ENCODE measurements at regions of chr11 and their contacts with region 1.

Region 1: DNA sequence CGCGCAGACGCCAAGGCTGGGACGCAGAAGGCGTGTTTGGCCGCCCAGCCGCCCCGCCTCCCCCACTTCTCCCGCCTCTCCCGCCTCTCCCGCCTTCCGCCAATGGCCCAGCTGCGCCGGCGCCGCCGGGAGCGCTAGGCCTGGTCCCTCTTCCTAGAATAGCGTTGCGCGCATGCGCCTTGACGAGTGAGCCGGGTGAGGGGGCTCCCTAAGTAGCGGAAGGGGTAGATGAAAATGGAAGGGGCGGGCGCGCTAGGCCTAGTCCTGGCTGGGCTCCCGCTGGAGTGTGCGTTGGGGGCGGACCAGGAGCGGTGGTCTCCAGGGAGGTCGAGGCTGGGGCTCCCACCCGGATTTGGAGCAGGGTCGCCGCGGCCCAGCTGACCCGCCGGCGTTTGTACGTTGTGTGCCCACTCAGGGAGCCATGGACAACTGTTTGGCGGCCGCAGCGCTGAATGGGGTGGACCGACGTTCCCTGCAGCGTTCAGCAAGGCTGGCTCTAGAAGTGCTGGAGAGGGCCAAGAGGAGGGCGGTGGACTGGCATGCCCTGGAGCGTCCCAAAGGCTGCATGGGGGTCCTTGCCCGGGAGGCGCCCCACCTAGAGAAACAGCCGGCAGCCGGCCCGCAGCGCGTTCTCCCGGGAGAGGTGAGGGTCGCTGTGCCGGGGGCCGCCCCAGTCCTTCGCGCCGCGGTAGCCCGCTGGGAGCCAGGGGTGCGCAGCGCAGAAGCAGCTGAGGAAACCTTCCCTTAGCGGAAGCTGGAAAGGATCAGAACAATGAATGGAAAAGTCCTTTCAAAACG is at the start of gene AKIP1:
- DNase-seq: peak; percentile 92 to 93
- ATAC-seq: peak; percentile 92 to 93
- H3K4me3 ChIP-seq: peak within 1 kb of the TSS; percentile 87
- H3K27ac ChIP-seq: peak within 1 kb of the TSS; percentile 98
- H3K4me1 ChIP-seq: peaks cover 42% of the 10 kb centered on the region
- CTCF ChIP-seq: no peak
- EP300 ChIP-seq: no peak
- POLR2A ChIP-seq: peak; percentile 77
- RAD21 ChIP-seq: no peak
- polyA plus RNA-seq, gene AKIP1: 61.3 and 66.7 TPM in 2 replicates

Region 2: GRCh38 chr11:8688414-8689362 is 222.5 kb before region 1 on chr11:
- CTCF ChIA-PET with region 1: interaction called, 3 read pairs
- POLR2A ChIA-PET with region 1: interaction called, 12 read pairs
- DNase-seq: peak; percentile 96 to 98
- ATAC-seq: peak; percentile 91 to 92
- H3K4me3 ChIP-seq: peak overlapping the region; percentile 59
- H3K27ac ChIP-seq: peak overlapping the region; percentile 85 to 88
- H3K4me1 ChIP-seq: peaks cover 49% of the 10 kb centered on the region
- CTCF ChIP-seq: 0 out of 3 replicates have a peak, but pooled peaks have one; percentile 23
- EP300 ChIP-seq: no peak
- POLR2A ChIP-seq: peak; percentile 83
- RAD21 ChIP-seq: peak; percentile 44 to 70

Region 3: GRCh38 chr11:8886322-8886721 is 24.9 kb before region 1 on chr11:
- CTCF ChIA-PET with region 1: no interaction called
- POLR2A ChIA-PET with region 1: no interaction called
- DNase-seq: no peak
- ATAC-seq: no peak
- H3K4me3 ChIP-seq: no peak overlapping the region
- H3K27ac ChIP-seq: no peak overlapping the region
- H3K4me1 ChIP-seq: peaks cover 5% of the 10 kb centered on the region; the same call in 1 of the 3 replicates
- CTCF ChIP-seq: no peak
- EP300 ChIP-seq: no peak
- POLR2A ChIP-seq: no peak
- RAD21 ChIP-seq: no peak

Region 4: DNA sequence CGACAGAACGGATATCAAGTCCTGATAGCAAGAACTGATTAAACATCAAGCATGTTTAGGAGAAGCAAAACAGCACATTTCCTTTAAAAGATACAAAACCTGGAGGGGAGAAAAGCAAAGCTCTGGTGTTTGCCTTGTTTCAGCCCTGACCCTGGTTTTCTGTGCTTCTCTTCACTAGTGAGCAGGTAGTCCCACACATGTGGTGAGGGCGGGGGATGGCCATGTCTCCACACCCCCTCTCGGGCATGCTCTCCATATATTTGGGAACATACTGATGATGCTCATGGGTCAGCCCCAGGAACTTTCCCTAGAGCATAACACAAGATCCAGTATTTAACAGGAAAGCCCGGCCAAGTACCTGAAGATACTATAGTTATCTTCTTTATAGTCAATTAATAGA is 11.5 kb after region 1 on chr11:
- CTCF ChIA-PET with region 1: interaction called, 26 read pairs
- POLR2A ChIA-PET with region 1: no interaction called
- DNase-seq: no peak
- ATAC-seq: no peak
- H3K4me3 ChIP-seq: no peak overlapping the region
- H3K27ac ChIP-seq: no peak overlapping the region
- H3K4me1 ChIP-seq: no peaks in the 10 kb centered on the region
- CTCF ChIP-seq: no peak
- EP300 ChIP-seq: no peak
- POLR2A ChIP-seq: no peak
- RAD21 ChIP-seq: no peak

Region 5: DNA sequence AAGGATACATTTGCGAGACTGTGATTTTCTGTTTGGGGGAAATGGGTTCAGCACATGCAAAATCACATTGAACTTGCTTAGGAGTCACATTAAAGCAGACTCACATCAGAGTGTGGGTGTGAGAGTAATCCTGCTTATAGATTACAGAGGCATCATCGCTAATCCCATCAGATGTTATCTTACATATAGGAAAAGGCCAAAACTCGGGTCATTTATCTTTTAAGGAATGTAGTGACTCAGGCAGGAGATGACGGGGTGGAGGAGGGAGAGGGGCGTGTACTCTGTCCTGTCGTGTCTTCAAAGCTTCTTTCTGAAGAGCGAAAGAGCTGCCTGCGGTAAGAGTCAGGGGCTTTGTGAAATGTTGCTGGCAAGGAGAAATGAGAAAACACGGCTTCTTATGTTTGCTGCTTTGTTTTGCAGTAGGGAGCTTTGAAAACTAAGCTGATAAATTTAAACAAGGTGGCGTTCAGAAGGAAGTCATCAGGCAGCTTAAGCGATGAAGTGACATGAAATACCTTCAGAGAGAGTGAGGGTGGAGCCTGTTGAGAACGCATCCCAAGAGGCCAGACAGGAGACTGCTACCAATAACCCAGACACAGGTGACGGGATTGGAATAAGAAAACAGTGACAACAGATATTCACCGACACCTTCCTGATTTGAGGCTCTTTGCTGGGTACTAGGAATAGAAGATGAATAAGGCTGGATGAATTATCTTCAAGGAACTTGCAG is 23.7 kb after region 1 on chr11:
- CTCF ChIA-PET with region 1: interaction called, 25 read pairs
- POLR2A ChIA-PET with region 1: no interaction called
- DNase-seq: peak in 1 of 2 experiments; percentile 48
- ATAC-seq: peak; percentile 83
- H3K4me3 ChIP-seq: no peak overlapping the region
- H3K27ac ChIP-seq: peak overlapping the region in 1 of 2 experiments; percentile 49; a peak in 2 of 6 replicates
- H3K4me1 ChIP-seq: peaks cover 11% of the 10 kb centered on the region
- CTCF ChIP-seq: no peak
- EP300 ChIP-seq: no peak
- POLR2A ChIP-seq: no peak
- RAD21 ChIP-seq: no peak

Region 6: GRCh38 chr11:8964324-8965320 is 53.4 kb after region 1 on chr11 and contains the start of gene TMEM9B:
- CTCF ChIA-PET with region 1: interaction called, 63 read pairs
- POLR2A ChIA-PET with region 1: interaction called, 6 read pairs
- DNase-seq: peak; percentile 87 to 92
- ATAC-seq: peak; percentile 93 to 94
- H3K4me3 ChIP-seq: peak within 1 kb of the TSS; percentile 78
- H3K27ac ChIP-seq: peak within 1 kb of the TSS; percentile 96
- H3K4me1 ChIP-seq: peaks cover 23% of the 10 kb centered on the region
- CTCF ChIP-seq: no peak
- EP300 ChIP-seq: no peak
- POLR2A ChIP-seq: peak; percentile 65
- RAD21 ChIP-seq: no peak; a peak in 1 of 5 replicates
- polyA plus RNA-seq, gene TMEM9B: 43.4 and 47.3 TPM in 2 replicates

Region 7: GRCh38 chr11:9020916-9021315 is 109.7 kb after region 1 on chr11:
- CTCF ChIA-PET with region 1: no interaction called
- POLR2A ChIA-PET with region 1: no interaction called
- DNase-seq: no peak
- ATAC-seq: no peak
- H3K4me3 ChIP-seq: no peak overlapping the region
- H3K27ac ChIP-seq: no peak overlapping the region
- H3K4me1 ChIP-seq: no peaks in the 10 kb centered on the region
- CTCF ChIP-seq: no peak
- EP300 ChIP-seq: no peak
- POLR2A ChIP-seq: no peak
- RAD21 ChIP-seq: no peak

Region 8: GRCh38 chr11:9250139-9250582 is 338.9 kb after region 1 on chr11:
- CTCF ChIA-PET with region 1: no interaction called
- POLR2A ChIA-PET with region 1: no interaction called
- DNase-seq: no peak
- ATAC-seq: no peak; a peak in 1 of 6 replicates
- H3K4me3 ChIP-seq: no peak overlapping the region
- H3K27ac ChIP-seq: no peak overlapping the region
- H3K4me1 ChIP-seq: peaks cover 9% of the 10 kb centered on the region; the same call in 2 of the 3 replicates
- CTCF ChIP-seq: no peak
- EP300 ChIP-seq: no peak
- POLR2A ChIP-seq: no peak
- RAD21 ChIP-seq: no peak

Measured in A549 (cell line).